ENCODE measurements at regions of chr16 and their contacts with region 1.

Region 1: GRCh38 chr16:56203052-56203451 is 11.8 kb downstream of the GNAO1 start:
- DNase-seq: peak; percentile 63
- ATAC-seq: peak; percentile 99
- H3K4me3 ChIP-seq: no peak overlapping the region
- H3K27ac ChIP-seq: no peak overlapping the region
- H3K4me1 ChIP-seq: no peaks in the 10 kb centered on the region
- H3K27me3 ChIP-seq: peaks cover 0 to 5% of the 10 kb centered on the region in 2 experiments; a peak in 2 of 5 replicates
- CTCF ChIP-seq: peak; percentile 71
- EP300 ChIP-seq: no peak
- POLR2A ChIP-seq: no peak
- RAD21 ChIP-seq: peak; percentile 58

Region 2: DNA sequence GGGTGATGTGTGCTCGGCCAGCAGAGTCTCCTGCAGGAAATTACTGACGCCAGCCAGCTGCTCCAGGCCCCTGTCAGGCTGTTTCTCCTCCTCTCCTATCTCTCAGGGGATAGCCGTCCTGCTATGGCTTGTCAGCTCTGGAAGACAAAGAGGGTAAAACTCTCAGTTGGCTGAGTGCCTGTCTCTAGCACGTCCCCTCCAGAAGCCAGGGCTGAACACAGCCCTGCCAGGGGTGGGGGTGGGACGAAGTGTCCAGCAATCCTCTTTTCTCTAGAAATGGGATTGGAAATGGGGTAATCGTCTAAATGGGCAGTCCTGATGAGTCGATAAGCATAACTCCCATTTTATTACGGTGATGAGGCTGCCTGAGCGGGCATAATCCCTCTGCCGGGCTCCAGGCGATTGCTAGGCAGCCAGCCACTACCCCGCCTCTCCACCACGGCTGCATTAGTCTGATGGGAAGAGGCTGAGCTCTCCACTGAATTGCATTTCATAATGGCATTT is 100.8 kb before region 1 on chr16:
- CTCF ChIA-PET with region 1: no interaction called
- POLR2A ChIA-PET with region 1: no interaction called
- in situ Hi-C with region 1: no loop called
- intact Hi-C with region 1: no loop called
- DNase-seq: no peak
- ATAC-seq: no peak
- H3K4me3 ChIP-seq: no peak overlapping the region
- H3K27ac ChIP-seq: no peak overlapping the region
- H3K4me1 ChIP-seq: no peaks in the 10 kb centered on the region
- H3K27me3 ChIP-seq: peaks cover 0 to 17% of the 10 kb centered on the region in 2 experiments; a peak in 2 of 5 replicates
- CTCF ChIP-seq: no peak
- EP300 ChIP-seq: no peak
- POLR2A ChIP-seq: no peak
- RAD21 ChIP-seq: no peak

Region 3: GRCh38 chr16:56317998-56318826 is 115.2 kb after region 1 on chr16:
- CTCF ChIA-PET with region 1: no interaction called
- POLR2A ChIA-PET with region 1: no interaction called
- in situ Hi-C with region 1: no loop called
- intact Hi-C with region 1: loop called (anchors 5 kb)
- DNase-seq: peak; percentile 62
- ATAC-seq: peak; percentile 95
- H3K4me3 ChIP-seq: peak overlapping the region in 1 of 3 experiments; percentile 11; a peak in 1 of 6 replicates
- H3K27ac ChIP-seq: no peak overlapping the region
- H3K4me1 ChIP-seq: no peaks in the 10 kb centered on the region
- H3K27me3 ChIP-seq: peaks cover 3 to 65% of the 10 kb centered on the region in 2 experiments
- CTCF ChIP-seq: peak; percentile 98
- EP300 ChIP-seq: no peak
- POLR2A ChIP-seq: no peak
- RAD21 ChIP-seq: peak; percentile 96

Measured in HepG2 (cell line).